Activated CD8-positive, alpha-beta T cell treated with anti-CD3 and anti-CD28 coated beads for 36 hours (primary cell): ENCODE measurements at regions of chr7 and their contacts with region 1.

Region 1: GRCh38 chr7:12458520-12459131 is 55.0 kb upstream of the VWDE start:
- DNase-seq: no peak
- ATAC-seq: peak; percentile 97
- H3K4me3 Mint-ChIP-seq: no peak overlapping the region
- H3K27ac Mint-ChIP-seq: no peak overlapping the region
- H3K4me1 Mint-ChIP-seq: no peaks in the 10 kb centered on the region
- H3K27me3 Mint-ChIP-seq: peaks cover 5% of the 10 kb centered on the region
- CTCF ChIP-seq: peak; percentile 67

Region 2: GRCh38 chr7:12436896-12437535 is 21.6 kb before region 1 on chr7:
- CTCF ChIA-PET with region 1: interaction called, 17 read pairs
- POLR2A ChIA-PET with region 1: no interaction called
- intact Hi-C with region 1: no loop called
- DNase-seq: no peak
- ATAC-seq: no peak
- H3K4me3 Mint-ChIP-seq: no peak overlapping the region
- H3K27ac Mint-ChIP-seq: no peak overlapping the region
- H3K4me1 Mint-ChIP-seq: no peaks in the 10 kb centered on the region
- H3K27me3 Mint-ChIP-seq: peaks cover 4% of the 10 kb centered on the region
- CTCF ChIP-seq: no peak

Region 3: GRCh38 chr7:12469568-12469967 is 10.9 kb after region 1 on chr7:
- CTCF ChIA-PET with region 1: interaction called, 26 read pairs
- POLR2A ChIA-PET with region 1: no interaction called
- intact Hi-C with region 1: no loop called
- DNase-seq: no peak
- ATAC-seq: no peak
- H3K4me3 Mint-ChIP-seq: no peak overlapping the region
- H3K27ac Mint-ChIP-seq: no peak overlapping the region
- H3K4me1 Mint-ChIP-seq: no peaks in the 10 kb centered on the region
- H3K27me3 Mint-ChIP-seq: peaks cover 4% of the 10 kb centered on the region
- CTCF ChIP-seq: no peak

Region 4: GRCh38 chr7:12481722-12482121 is 23.1 kb after region 1 on chr7:
- CTCF ChIA-PET with region 1: interaction called, 37 read pairs
- POLR2A ChIA-PET with region 1: no interaction called
- intact Hi-C with region 1: no loop called
- DNase-seq: no peak
- ATAC-seq: peak; percentile 91
- H3K4me3 Mint-ChIP-seq: no peak overlapping the region
- H3K27ac Mint-ChIP-seq: peak overlapping the region; percentile 10
- H3K4me1 Mint-ChIP-seq: peaks cover 12% of the 10 kb centered on the region
- H3K27me3 Mint-ChIP-seq: no peaks in the 10 kb centered on the region
- CTCF ChIP-seq: no peak

Region 5: DNA sequence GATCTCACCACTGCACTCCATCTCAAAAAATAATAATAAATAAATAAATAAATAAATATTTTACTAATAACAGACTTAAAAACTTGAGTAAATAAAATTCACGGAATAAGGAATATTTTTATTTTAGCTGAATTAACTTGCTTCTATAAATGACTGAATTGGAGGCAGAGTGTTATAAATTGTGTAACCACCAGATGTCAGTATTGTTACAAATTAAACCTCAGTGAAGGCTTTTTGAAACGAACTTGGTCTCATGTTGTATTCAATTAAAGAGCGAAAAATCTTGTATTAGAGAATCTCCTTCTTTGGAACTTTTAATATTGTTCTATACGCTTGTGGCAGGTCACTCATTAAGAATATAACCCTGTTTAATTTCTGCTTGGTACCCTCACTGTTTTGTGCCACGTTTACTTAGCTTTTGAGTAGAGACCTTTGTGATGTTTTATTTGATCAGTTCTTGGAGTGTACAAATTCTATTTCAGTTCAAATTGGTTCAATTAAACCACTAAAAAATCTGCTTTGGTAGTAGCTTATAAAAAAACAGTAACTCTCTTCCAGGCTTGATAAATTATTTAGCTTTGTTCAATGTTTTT is 66.3 kb after region 1 on chr7:
- CTCF ChIA-PET with region 1: interaction called, 15 read pairs
- POLR2A ChIA-PET with region 1: no interaction called
- intact Hi-C with region 1: no loop called
- DNase-seq: no peak
- ATAC-seq: peak; percentile 42
- H3K4me3 Mint-ChIP-seq: no peak overlapping the region
- H3K27ac Mint-ChIP-seq: no peak overlapping the region
- H3K4me1 Mint-ChIP-seq: no peaks in the 10 kb centered on the region
- H3K27me3 Mint-ChIP-seq: peaks cover 8% of the 10 kb centered on the region
- CTCF ChIP-seq: peak; percentile 84